Activated CD4-positive, alpha-beta memory T cell treated with anti-CD3 and anti-CD28 coated beads, Interleukin-2, amount 10 ng/mL, durations not matched to agents 7 days and 5 days (primary cell): ENCODE measurements at regions of chr20 and their contacts with region 1.

Region 1: DNA sequence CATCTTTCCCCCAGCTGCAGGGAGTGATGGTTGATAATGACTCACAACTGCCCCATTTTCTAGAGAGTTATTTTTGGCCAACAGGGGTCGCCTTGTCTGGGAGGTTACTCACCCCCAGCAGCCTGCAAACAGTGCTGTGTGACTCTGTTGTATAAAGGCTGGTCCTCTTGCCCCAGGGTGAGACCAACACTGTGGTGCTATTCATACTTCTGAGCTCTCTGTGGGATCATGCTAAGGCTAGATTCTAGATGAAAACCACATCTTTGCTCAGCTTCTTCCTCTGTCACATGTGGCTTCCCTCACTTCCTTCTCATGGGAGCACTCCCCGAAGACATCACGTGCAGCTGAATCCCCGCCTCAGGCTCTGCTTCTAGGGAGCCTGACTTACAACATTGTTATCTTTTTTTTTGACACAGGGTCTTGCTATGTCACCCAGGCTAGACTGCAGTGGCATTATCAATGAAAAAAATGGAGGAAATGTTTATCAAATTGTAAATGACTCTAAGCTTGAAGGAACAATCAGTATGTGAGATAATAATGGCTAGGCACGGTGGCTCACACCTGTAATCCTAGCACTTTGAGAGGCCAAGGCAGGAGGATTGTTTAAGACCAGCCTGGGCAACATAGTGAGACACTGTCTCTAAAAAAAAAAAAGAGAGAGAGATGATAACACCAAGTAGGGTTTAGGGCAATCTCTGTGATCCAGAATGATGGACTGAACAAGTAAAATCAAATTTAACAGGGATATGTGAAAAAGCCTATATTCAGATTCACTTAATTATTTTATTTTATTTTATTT is 55.7 kb upstream of the SLC23A2 start:
- DNase-seq: peak; percentile 79
- H3K4me3 Mint-ChIP-seq: no peak overlapping the region
- H3K27ac Mint-ChIP-seq: peak overlapping the region; percentile 88
- H3K4me1 Mint-ChIP-seq: peaks cover 31% of the 10 kb centered on the region
- H3K27me3 Mint-ChIP-seq: peaks cover 2% of the 10 kb centered on the region

Region 2: DNA sequence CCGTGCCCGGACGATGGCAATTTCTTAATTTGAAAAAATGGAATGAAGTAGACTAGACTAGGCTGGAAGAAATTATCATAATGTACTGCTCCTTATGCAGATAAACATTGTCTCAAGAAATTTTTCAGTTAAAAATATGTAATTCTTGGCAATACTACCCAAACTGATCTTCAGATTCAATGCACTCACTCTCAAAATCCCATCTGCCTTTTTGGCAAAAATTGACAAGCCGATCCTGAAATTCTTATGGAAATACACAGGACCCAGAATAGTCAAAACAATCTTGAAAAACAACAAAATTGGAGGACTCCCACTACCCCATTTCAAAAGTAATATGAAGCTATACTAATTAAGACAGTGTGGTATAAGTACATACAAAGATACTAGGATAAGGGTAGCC is 74.7 kb before region 1 on chr20:
- CTCF ChIA-PET with region 1: no interaction called
- POLR2A ChIA-PET with region 1: no interaction called
- DNase-seq: no peak
- H3K4me3 Mint-ChIP-seq: no peak overlapping the region
- H3K27ac Mint-ChIP-seq: no peak overlapping the region
- H3K4me1 Mint-ChIP-seq: peaks cover 10% of the 10 kb centered on the region
- H3K27me3 Mint-ChIP-seq: no peaks in the 10 kb centered on the region

Region 3: GRCh38 chr20:5072756-5073659 is 16.0 kb after region 1 on chr20:
- CTCF ChIA-PET with region 1: interaction called, 31 read pairs
- POLR2A ChIA-PET with region 1: interaction called, 7 read pairs
- DNase-seq: no peak
- H3K4me3 Mint-ChIP-seq: no peak overlapping the region
- H3K27ac Mint-ChIP-seq: no peak overlapping the region
- H3K4me1 Mint-ChIP-seq: peaks cover 27% of the 10 kb centered on the region
- H3K27me3 Mint-ChIP-seq: no peaks in the 10 kb centered on the region

Region 4: GRCh38 chr20:5090191-5090590 is 33.2 kb after region 1 on chr20:
- CTCF ChIA-PET with region 1: interaction called, 17 read pairs
- POLR2A ChIA-PET with region 1: interaction called, 9 read pairs
- DNase-seq: peak; percentile 27
- H3K4me3 Mint-ChIP-seq: no peak overlapping the region
- H3K27ac Mint-ChIP-seq: peak overlapping the region; percentile 67
- H3K4me1 Mint-ChIP-seq: peaks cover 16% of the 10 kb centered on the region
- H3K27me3 Mint-ChIP-seq: no peaks in the 10 kb centered on the region

Region 5: DNA sequence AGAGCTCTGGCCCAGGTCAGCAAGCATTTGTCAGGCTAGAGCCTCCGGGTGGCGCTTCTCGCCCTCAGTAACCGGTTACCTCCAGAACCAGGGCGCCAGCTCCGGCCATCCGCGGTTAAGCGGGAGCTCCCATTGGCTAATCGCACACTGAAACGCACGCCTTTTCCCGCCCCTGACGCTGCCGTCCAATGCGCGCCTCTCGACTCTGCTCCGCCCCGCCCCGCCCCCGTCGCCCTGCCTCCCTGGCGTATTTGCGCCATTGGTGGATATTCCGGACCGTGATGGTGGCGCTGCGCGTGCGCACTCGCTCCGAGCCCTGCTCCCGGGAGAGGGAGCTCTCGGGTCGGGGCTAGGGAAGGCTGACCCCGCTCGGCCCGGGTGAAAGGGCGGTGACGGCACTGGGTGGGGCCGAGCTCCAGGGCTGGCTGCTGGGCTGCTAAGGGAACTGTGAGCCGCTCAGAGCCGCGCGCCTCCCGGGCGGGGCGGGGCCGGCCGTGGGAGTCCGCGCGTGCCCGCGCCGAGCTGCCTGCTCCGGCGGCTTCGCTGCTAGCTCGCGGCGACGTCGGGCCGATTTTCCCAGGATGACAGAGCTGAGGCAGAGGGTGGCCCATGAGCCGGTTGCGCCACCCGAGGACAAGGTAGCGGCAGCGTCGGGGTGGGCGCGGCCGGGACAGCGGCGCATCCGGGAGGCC is 69.7 kb after region 1 on chr20 and contains the start of gene CDS2:
- CTCF ChIA-PET with region 1: interaction called, 13 read pairs
- POLR2A ChIA-PET with region 1: interaction called, 10 read pairs
- DNase-seq: peak; percentile 100
- H3K4me3 Mint-ChIP-seq: peak within 1 kb of the TSS; percentile 97
- H3K27ac Mint-ChIP-seq: peak within 1 kb of the TSS; percentile 92
- H3K4me1 Mint-ChIP-seq: peaks cover 56% of the 10 kb centered on the region
- H3K27me3 Mint-ChIP-seq: no peaks in the 10 kb centered on the region
- total RNA-seq, gene CDS2: 67.4 to 68.2 TPM